Psoas muscle (tissue), 8 donors: ENCODE measurements at regions of chr22 and their contacts with region 1.

Region 1: DNA sequence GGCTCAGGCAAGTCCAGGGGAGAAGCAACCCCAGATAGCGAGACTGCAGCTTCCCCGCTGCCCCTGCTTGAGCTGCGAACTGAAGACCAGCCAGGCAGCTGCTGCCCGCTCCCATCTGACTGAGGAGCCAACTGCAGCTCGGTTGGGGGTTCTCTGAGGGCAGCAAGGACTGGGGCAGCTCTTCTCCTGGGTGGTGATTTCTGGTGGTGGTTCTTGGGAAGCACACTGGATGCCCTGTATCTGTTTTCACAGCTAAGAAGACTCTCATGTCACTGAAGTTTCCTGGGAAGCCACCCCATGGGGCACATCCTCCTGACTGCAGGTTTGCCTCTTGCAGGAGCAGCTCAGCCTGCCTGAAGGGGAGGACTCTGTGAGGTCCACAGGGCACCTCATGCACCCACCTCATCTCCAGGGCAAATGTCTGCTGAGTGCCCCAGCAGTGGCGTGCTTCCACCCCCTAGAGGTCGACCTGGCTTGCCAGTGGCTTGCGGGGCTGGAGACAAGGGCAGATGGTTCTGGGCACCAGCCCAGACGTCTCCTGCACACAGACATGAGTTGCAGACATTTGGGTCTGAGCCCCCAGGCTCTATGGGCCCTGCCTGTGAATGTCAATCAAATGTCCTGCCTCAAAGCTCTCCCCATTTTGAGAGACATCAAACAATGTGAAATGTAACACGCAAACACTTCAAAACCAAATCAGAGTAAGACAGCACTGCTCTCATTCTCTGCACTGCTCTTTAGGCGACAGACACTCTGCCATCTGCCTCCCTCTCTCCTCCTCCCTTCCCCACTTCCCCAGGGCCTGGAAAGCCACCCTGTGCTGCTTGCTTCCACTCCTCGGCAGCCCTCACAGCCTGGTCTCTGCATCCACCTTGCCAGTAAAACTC is 800.9 kb downstream of the BRD1 start:
- DNase-seq: peak in 1 of 2 donors; percentile 27
- ATAC-seq: no peak
- H3K4me3 ChIP-seq: no peak overlapping the region
- H3K27ac ChIP-seq: no peak overlapping the region
- H3K4me1 ChIP-seq: no peaks in the 10 kb centered on the region
- H3K27me3 ChIP-seq: peaks cover 0 to 13% (median 2%) of the 10 kb centered on the region in 3 donors
- CTCF ChIP-seq: no peak

Region 2: DNA sequence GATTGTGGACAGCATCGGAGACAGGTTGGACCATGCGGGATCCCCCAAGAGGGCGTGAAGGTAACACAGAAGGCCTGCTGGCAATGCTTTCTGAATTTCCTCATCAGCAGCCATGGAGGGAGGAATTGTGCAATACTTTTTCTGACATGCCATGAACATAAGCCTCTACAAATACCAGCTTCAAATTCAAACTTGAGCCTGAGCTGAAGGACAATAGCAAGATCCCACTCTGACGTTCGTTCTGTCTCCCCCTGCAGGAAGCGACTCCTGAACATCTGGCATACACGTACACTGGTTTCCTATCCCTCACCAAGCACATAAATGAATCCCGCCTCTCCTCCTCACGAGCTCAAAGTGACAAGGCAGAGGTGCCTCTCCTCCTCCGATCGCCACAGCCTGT is 488.7 kb after region 1 on chr22:
- intact Hi-C with region 1: no loop called
- DNase-seq: no peak
- ATAC-seq: no peak
- H3K4me3 ChIP-seq: no peak overlapping the region
- H3K27ac ChIP-seq: no peak overlapping the region
- H3K4me1 ChIP-seq: no peaks in the 10 kb centered on the region
- H3K27me3 ChIP-seq: peaks cover 0 to 2% (median 0%) of the 10 kb centered on the region in 3 donors
- CTCF ChIP-seq: no peak

Region 3: GRCh38 chr22:50178871-50179869 is 1152.4 kb after region 1 on chr22:
- intact Hi-C with region 1: loop called in 1 of 2 experiments (anchors 5 kb)
- DNase-seq: peak in 1 of 2 donors; percentile 50
- ATAC-seq: no peak
- H3K4me3 ChIP-seq: no peak overlapping the region
- H3K27ac ChIP-seq: no peak overlapping the region
- H3K4me1 ChIP-seq: peaks cover 4% of the 10 kb centered on the region
- H3K27me3 ChIP-seq: peaks cover 0 to 59% (median 6%) of the 10 kb centered on the region in 3 donors
- CTCF ChIP-seq: no peak